A673 (cell line): ENCODE measurements at regions of chr9 and their contacts with region 1.

Region 1: GRCh38 chr9:86486891-86487837 is 133.0 kb upstream of the TUT7 start:
- DNase-seq: peak; percentile 90
- H3K4me3 ChIP-seq: no peak overlapping the region
- H3K27ac ChIP-seq: peak overlapping the region; percentile 72
- H3K4me1 ChIP-seq: peaks cover 38% of the 10 kb centered on the region
- H3K27me3 ChIP-seq: no peaks in the 10 kb centered on the region
- CTCF ChIP-seq: peak; percentile 74

Region 2: GRCh38 chr9:86298873-86299272 is 188.3 kb before region 1 on chr9:
- CTCF ChIA-PET with region 1: no interaction called
- POLR2A ChIA-PET with region 1: no interaction called
- intact Hi-C with region 1: no loop called
- DNase-seq: no peak
- H3K4me3 ChIP-seq: no peak overlapping the region
- H3K27ac ChIP-seq: no peak overlapping the region
- H3K4me1 ChIP-seq: peaks cover 14% of the 10 kb centered on the region
- H3K27me3 ChIP-seq: no peaks in the 10 kb centered on the region
- CTCF ChIP-seq: no peak

Region 3: DNA sequence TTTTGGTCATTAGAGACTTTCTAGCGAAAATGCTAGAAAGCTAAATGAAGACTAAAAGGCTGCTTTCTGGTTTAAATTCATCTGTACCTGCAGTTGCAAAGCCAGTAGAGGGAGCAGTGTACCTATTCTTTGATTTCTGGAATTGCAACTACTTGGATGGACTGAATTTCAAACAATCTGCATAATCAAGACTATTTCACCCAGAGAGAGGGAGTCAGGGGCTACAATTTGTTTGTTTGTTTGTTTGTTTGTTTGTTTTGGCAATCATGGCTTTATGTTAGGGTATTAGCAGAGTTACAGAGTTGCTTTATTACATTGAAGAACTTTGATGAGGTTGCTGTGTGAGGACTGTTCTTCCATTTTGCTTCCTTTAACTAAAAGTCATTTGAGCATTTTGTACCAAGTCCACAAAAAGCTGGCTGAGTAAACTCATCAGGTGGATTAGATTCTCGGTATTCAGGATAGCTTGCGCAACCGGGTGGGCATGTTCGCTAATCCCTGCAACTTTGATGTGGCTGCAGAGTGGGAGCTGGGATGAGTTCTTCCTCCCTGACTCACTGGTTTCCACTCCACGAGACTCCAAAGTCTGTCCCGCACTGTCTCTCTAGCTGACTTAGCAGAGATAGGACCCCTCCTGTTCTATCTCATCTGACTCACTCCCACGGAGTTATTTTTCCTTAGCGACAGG is 53.0 kb before region 1 on chr9:
- CTCF ChIA-PET with region 1: interaction called, 7 read pairs
- POLR2A ChIA-PET with region 1: no interaction called
- intact Hi-C with region 1: loop called (anchors 1 kb)
- DNase-seq: peak; percentile 84
- H3K4me3 ChIP-seq: peak overlapping the region; percentile 9
- H3K27ac ChIP-seq: peak overlapping the region; percentile 69
- H3K4me1 ChIP-seq: peaks cover 9% of the 10 kb centered on the region
- H3K27me3 ChIP-seq: no peaks in the 10 kb centered on the region
- CTCF ChIP-seq: peak; percentile 92

Region 4: DNA sequence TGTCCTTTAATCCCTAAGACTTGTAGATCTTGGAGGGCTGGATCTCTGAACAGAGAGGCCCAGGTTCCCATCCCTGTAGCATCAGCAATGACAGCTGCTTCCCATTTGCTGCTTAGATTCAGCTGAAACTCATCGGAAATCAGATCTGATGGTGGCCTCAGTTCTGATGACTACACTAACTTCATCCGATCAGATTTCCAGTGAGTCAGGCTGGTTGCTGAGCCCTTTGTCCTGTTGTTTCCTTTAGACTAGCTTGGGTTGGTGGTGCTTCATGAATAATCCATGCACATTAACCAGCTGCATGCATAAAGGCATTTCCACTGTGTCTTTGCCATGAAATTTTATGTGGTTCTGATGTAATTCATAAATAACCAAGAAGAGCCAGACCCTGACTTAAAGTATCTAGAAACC is 62.2 kb after region 1 on chr9:
- CTCF ChIA-PET with region 1: no interaction called
- POLR2A ChIA-PET with region 1: no interaction called
- intact Hi-C with region 1: loop called (anchors 5 kb)
- DNase-seq: peak; percentile 99
- H3K4me3 ChIP-seq: no peak overlapping the region
- H3K27ac ChIP-seq: peak overlapping the region; percentile 96
- H3K4me1 ChIP-seq: peaks cover 74% of the 10 kb centered on the region
- H3K27me3 ChIP-seq: no peaks in the 10 kb centered on the region
- CTCF ChIP-seq: no peak